AG04449 (cell line): ENCODE measurements at regions of chr22 and their contacts with region 1.

Region 1: DNA sequence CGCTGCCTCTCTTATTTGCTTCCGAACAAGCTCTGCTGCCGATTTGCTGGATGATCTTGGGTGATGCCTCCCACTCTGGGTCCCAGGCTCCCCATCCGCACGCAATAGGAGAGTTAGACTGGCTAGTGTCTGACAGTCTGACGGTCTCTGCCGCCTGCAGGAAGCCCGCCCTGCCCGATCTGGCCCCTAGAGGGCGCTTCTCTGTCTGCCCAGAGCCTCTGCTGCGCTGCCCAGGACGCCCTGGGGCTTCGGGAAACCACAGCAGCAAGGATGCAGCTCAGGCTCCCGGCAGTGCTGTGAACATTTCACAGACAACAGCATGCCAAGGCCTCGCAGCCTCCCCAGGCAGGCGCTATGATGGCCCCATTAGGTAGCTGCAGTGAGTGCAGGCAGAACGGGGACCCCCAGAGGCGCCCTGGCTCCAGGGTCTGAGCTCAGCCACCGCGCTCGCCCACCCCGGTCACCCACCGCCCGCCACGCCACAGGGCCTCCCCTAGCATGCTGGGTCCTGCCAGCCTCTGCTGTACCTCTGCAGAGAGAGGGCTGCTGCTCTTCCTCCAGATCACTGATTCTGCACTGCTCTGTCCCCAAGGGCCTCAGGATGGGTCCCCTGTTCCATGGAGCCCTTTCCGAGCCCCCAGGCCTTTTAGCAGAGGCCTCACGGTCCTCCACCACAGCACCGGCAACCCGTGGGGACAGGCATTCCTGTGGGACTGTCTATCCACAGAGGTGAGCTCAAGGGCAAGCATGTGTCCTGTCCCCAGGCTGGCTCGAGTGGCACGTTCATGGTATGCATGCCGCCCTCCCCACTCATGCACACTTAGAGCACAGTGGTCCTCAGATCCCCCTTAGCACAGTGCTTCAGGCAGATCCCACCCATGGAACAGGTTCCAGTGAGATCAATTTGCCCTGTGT is 4.3 kb upstream of the BAIAP2L2 start:
- DNase-seq: peak; percentile 23
- H3K4me3 ChIP-seq: no peak overlapping the region
- CTCF ChIP-seq: peak; percentile 98

Region 2: GRCh38 chr22:38104084-38104483 is 10.7 kb before region 1 on chr22:
- CTCF ChIA-PET with region 1: interaction called, 87 read pairs
- POLR2A ChIA-PET with region 1: no interaction called
- DNase-seq: no peak
- H3K4me3 ChIP-seq: no peak overlapping the region
- CTCF ChIP-seq: peak; percentile 35

Region 3: GRCh38 chr22:38143036-38143697 is 28.4 kb after region 1 on chr22:
- CTCF ChIA-PET with region 1: interaction called, 34 read pairs
- POLR2A ChIA-PET with region 1: no interaction called
- DNase-seq: no peak
- H3K4me3 ChIP-seq: no peak overlapping the region
- CTCF ChIP-seq: no peak

Region 4: DNA sequence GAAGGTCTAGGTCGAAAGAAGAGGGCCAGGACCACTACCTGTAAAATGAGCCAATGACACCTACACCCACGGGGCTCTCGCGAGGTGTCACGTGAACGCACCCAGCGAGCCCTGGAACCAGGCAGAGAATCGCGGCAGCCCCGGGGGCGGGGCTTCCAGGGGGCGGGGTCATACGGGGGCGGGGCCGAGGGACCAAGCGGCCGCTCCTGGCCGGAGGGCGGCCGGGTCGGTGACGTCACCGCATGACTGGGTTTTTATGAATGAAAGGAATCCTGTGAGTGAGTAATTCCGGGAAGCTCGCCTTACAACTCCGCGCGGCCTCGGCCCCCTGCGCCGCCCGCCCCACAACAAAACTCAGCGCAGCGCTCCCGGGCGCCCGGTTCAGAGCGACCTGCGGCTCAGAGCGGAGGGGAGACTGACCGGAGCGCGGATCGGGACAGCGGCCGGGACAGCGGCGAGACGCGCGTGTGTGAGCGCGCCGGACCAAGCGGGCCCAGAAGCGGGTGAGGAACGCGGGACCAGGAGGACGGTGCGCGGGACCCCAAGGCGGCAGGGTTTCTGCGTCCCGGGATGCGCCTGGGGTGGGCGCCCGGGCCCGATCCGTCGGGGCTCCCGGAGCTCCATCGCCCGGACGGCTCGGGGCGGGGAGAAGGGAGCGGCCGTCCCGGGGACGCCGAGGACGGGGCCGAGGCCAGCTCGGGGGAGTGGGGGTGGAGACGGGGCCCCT is 87.1 kb after region 1 on chr22 and contains the start of gene MAFF:
- CTCF ChIA-PET with region 1: interaction called, 33 read pairs
- POLR2A ChIA-PET with region 1: no interaction called
- DNase-seq: peak; percentile 73
- H3K4me3 ChIP-seq: peak within 1 kb of the TSS; percentile 83
- CTCF ChIP-seq: no peak

Region 5: GRCh38 chr22:38272373-38273134 is 157.8 kb after region 1 on chr22 and contains the start of gene TMEM184B:
- CTCF ChIA-PET with region 1: interaction called, 13 read pairs
- POLR2A ChIA-PET with region 1: no interaction called
- DNase-seq: no peak
- H3K4me3 ChIP-seq: peak within 1 kb of the TSS; percentile 85
- CTCF ChIP-seq: no peak